ENCODE measurements at regions of chr1 and their contacts with region 1.

Region 1: DNA sequence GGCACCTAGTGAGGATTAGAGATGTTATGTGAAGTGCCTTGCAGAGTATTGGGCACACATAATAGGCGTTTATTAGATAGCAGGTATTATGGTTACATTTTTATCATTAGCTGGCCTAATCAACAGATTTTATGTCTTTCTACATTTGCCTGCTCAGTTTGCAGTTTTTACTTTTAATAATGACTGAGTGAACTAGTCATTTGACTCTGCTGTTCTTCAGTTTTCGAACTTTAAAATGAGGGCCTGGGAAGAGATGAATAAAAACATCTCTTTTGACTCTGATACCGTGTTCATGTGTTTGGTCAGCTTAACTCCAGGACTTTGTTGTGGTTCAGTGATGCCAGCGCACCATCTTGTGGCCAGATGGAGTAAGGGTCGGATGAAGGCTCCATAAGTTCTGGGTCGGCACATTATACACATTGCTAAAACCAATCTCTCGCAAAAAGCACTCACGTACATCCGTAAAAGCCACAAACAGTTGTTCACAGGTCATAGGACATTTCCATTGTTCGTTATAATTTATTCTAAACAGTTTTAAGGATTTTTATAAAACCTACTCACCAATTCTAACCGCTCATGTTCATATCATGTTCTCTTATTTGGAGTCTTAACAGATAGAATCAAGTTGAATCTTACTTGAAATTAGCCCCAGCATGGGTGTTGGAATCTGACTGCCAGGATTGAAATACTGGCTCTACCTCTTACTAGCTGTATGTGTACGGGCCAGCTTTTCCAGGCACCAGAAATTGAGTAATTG is 78.4 kb upstream of the GPR88 start:
- DNase-seq: peak; percentile 79
- ATAC-seq: peak; percentile 80
- H3K4me3 Mint-ChIP-seq: no peak overlapping the region
- H3K27ac Mint-ChIP-seq: no peak overlapping the region
- H3K4me1 Mint-ChIP-seq: peaks cover 37% of the 10 kb centered on the region
- H3K27me3 Mint-ChIP-seq: no peaks in the 10 kb centered on the region

Region 2: DNA sequence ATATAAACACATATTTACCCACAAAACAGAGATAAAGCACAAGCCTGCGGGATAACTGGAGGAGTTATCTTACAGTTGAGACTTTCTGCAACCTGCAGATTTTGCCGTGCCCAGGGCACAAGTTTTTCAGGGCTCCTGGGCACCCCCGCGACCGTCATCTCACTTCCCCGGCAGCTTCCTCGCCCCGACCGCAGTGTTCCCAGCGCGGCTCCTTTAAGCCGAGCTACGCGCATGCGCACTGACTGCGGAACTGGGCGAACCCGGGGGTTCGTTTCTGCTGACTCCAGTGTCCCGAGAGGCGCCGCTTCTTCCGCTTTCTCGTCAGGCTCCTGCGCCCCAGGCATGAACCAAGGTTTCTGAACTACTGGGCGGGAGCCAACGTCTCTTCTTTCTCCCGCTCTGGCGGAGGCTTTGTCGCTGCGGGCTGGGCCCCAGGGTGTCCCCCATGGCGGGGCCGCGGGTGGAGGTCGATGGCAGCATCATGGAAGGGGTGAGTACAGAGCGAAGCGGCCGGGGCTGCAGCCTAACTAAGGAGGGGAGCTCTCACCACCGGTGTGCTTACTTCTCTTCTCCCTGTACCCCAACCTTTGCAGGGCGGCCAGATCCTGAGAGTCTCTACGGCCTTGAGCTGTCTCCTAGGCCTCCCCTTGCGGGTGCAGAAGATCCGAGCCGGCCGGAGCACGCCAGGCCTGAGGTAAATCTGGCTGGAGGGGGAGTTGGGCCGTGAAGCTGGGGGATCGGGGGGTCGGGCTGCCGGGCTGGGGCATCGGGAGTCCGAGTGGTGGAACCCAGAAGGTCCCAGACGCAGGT is 193.4 kb before region 1 on chr1 and contains the start of gene RTCA:
- CTCF ChIA-PET with region 1: interaction called, 7 read pairs
- POLR2A ChIA-PET with region 1: interaction called, 13 read pairs
- DNase-seq: peak; percentile 96
- ATAC-seq: peak; percentile 94
- H3K4me3 Mint-ChIP-seq: peak within 1 kb of the TSS; percentile 100
- H3K27ac Mint-ChIP-seq: peak within 1 kb of the TSS; percentile 99
- H3K4me1 Mint-ChIP-seq: peaks cover 38% of the 10 kb centered on the region
- H3K27me3 Mint-ChIP-seq: no peaks in the 10 kb centered on the region
- total RNA-seq, gene RTCA: 51.6 to 51.7 TPM

Region 3: DNA sequence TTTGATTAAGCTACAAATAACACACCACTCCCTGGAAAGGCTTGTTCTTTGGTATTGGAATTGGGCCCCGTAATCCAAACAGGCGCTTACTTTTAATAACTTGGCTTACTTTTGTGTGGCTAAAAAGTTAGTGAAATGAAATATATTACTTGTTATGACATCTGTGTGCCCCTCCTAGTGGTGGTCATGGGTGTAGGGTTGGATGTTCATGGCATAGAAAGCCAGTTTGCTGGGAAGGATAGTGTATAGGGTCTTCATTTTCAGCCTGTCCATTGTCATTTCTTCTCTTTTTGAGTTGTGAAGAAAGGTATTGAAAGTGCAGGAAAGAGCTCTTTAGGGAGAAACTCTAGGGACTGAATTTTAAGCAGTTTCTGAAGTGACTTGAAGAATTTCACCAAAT is 101.3 kb before region 1 on chr1:
- CTCF ChIA-PET with region 1: interaction called, 46 read pairs
- POLR2A ChIA-PET with region 1: interaction called, 6 read pairs
- DNase-seq: peak; percentile 37
- ATAC-seq: no peak
- H3K4me3 Mint-ChIP-seq: no peak overlapping the region
- H3K27ac Mint-ChIP-seq: no peak overlapping the region
- H3K4me1 Mint-ChIP-seq: peaks cover 69% of the 10 kb centered on the region
- H3K27me3 Mint-ChIP-seq: no peaks in the 10 kb centered on the region

Region 4: DNA sequence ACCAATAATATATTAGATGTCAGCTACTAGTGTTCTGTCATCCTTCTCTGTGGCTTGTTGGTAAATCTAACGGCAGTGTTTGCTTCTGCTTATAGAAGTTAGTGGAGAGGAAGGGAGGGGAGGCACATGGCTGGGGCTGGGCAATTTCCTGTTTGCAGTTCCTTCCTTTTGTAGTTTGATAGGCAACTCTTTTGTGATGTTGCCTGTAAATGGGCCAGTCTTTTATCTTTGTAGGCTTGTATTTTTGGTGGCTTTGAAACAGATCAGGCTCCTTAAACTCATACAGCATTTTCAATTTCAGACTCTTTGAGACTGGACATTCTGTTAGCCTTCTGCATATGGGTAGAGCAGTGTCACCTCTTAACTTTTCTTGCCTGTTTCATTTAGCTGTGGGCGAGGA is 59.1 kb before region 1 on chr1:
- CTCF ChIA-PET with region 1: interaction called, 16 read pairs
- POLR2A ChIA-PET with region 1: interaction called, 3 read pairs
- DNase-seq: peak; percentile 85
- ATAC-seq: peak; percentile 90
- H3K4me3 Mint-ChIP-seq: peak overlapping the region; percentile 58
- H3K27ac Mint-ChIP-seq: peak overlapping the region; percentile 91
- H3K4me1 Mint-ChIP-seq: peaks cover 85% of the 10 kb centered on the region
- H3K27me3 Mint-ChIP-seq: no peaks in the 10 kb centered on the region

Region 5: DNA sequence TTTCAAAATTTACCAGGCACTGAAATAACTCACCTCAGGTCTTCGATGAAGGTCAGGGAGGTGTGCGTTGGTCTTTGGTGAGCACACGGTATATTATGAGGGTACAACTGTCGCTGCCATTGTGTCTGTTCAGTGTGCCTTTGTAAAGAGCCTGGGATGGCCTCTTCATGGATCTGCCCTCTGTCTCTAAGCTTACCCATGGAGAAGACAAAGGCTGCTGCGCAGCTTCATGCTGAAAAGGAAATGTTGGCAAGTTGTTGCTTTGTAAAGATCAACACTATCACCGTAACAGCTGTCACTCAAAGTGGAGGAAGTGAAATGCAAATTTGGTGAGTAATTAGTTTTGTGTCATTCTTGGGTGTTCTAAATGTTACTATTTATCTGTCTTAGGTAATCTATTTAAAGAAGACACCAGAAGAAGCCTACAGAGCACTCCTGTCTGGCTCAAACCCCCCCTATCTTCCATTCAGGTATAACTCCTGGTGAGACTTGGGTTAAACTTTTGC is 35.7 kb before region 1 on chr1:
- CTCF ChIA-PET with region 1: interaction called, 14 read pairs
- POLR2A ChIA-PET with region 1: no interaction called
- DNase-seq: no peak
- ATAC-seq: peak; percentile 36
- H3K4me3 Mint-ChIP-seq: no peak overlapping the region
- H3K27ac Mint-ChIP-seq: no peak overlapping the region
- H3K4me1 Mint-ChIP-seq: peaks cover 36% of the 10 kb centered on the region
- H3K27me3 Mint-ChIP-seq: no peaks in the 10 kb centered on the region

Region 6: DNA sequence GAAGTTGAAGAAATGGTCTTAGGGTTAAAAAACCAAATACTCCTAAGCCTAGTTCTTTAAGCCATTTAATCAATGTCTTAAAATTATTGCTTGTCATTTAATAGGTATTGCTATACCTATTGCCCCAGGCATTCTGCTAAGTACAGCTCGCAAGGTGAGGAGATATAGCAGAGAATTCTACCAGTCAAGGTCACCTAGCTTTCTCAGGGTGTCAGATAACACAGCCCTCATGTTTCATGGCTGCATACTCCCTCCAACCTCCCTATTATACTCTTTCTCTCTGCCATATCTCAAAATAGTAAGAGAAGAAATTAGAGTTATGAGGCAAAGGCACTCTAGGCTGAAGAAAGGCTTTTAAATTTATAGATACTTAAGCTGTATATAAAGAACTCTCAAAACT is 10.0 kb after region 1 on chr1:
- CTCF ChIA-PET with region 1: interaction called, 18 read pairs
- POLR2A ChIA-PET with region 1: interaction called, 3 read pairs
- DNase-seq: no peak
- ATAC-seq: no peak
- H3K4me3 Mint-ChIP-seq: no peak overlapping the region
- H3K27ac Mint-ChIP-seq: no peak overlapping the region
- H3K4me1 Mint-ChIP-seq: peaks cover 10% of the 10 kb centered on the region
- H3K27me3 Mint-ChIP-seq: no peaks in the 10 kb centered on the region

Region 7: DNA sequence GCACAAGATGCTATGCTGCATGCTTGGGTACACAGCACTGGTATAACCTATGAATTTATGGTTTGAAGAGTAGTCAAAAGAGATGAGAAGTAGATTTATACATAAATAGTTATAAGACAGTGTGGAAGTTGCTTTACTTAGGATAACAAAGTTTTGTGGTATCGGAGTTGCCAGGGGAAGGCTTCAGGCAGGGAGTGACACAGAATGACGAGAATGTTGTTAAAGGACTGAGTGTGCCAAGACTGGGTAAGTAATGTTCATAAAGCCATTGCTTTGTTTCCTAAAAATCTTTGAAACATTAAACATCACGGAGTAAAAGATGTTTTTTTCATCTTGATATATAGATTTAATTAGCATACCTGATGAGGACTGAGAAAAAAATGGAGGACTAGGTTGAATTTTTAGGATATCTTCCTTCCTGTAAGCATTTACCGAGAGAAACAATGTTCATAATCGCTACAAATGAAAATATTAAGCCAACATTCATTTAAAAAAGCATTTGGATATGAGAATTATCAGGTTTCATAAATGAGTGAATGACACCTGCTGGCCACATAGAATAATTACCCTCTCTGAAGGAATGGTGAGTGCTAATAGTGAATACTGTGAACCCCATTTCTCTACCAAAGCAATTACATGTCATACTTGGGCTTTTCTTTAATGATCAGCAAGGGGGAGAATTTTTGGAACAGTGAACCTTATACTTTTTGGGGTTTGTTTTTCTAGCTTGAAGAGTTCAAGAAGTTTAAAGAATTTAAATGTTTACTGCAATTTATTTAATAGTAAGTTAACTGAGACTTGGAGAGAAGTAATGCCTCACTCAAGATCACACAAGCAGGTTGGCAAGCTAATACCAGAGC is 406.7 kb after region 1 on chr1:
- CTCF ChIA-PET with region 1: interaction called, 227 read pairs
- POLR2A ChIA-PET with region 1: no interaction called
- DNase-seq: no peak
- ATAC-seq: peak; percentile 49
- H3K4me3 Mint-ChIP-seq: no peak overlapping the region
- H3K27ac Mint-ChIP-seq: no peak overlapping the region
- H3K4me1 Mint-ChIP-seq: no peaks in the 10 kb centered on the region
- H3K27me3 Mint-ChIP-seq: no peaks in the 10 kb centered on the region

Measured in activated CD8-positive, alpha-beta T cell treated with anti-CD3 and anti-CD28 coated beads, Interleukin-2, amount 10 ng/mL, durations not matched to agents 7 days and 5 days (primary cell).